Activated naive CD4-positive, alpha-beta T cell treated with anti-CD3 and anti-CD28 coated beads for 36 hours (primary cell): ENCODE measurements at regions of chr10 and their contacts with region 1.

Region 1: GRCh38 chr10:11236234-11236633 is 218.6 kb downstream of the CELF2 start:
- DNase-seq: peak; percentile 61
- H3K4me3 Mint-ChIP-seq: peak overlapping the region; percentile 26
- H3K27ac Mint-ChIP-seq: peak overlapping the region; percentile 93
- H3K4me1 Mint-ChIP-seq: peaks cover 92% of the 10 kb centered on the region
- H3K27me3 Mint-ChIP-seq: no peaks in the 10 kb centered on the region

Region 2: GRCh38 chr10:11170993-11171851 is 65.0 kb before region 1 on chr10:
- CTCF ChIA-PET with region 1: interaction called, 5 read pairs
- intact Hi-C with region 1: loop called (anchors 1 kb)
- DNase-seq: peak; percentile 80
- H3K4me3 Mint-ChIP-seq: no peak overlapping the region
- H3K27ac Mint-ChIP-seq: no peak overlapping the region
- H3K4me1 Mint-ChIP-seq: peaks cover 41% of the 10 kb centered on the region
- H3K27me3 Mint-ChIP-seq: no peaks in the 10 kb centered on the region

Region 3: GRCh38 chr10:11218395-11218794 is 17.8 kb before region 1 on chr10:
- CTCF ChIA-PET with region 1: interaction called, 5 read pairs
- intact Hi-C with region 1: loop called (anchors 1 kb)
- DNase-seq: peak; percentile 64
- H3K4me3 Mint-ChIP-seq: no peak overlapping the region
- H3K27ac Mint-ChIP-seq: peak overlapping the region; percentile 89
- H3K4me1 Mint-ChIP-seq: peaks cover 89% of the 10 kb centered on the region
- H3K27me3 Mint-ChIP-seq: no peaks in the 10 kb centered on the region

Region 4: GRCh38 chr10:11270135-11270857 is 34.1 kb after region 1 on chr10:
- CTCF ChIA-PET with region 1: interaction called, 12 read pairs
- intact Hi-C with region 1: loop called (anchors 1 kb)
- DNase-seq: peak; percentile 85
- H3K4me3 Mint-ChIP-seq: no peak overlapping the region
- H3K27ac Mint-ChIP-seq: peak overlapping the region; percentile 52
- H3K4me1 Mint-ChIP-seq: peaks cover 77% of the 10 kb centered on the region
- H3K27me3 Mint-ChIP-seq: no peaks in the 10 kb centered on the region

Region 5: GRCh38 chr10:11472158-11472753 is 236.0 kb after region 1 on chr10:
- CTCF ChIA-PET with region 1: no interaction called
- intact Hi-C with region 1: no loop called
- DNase-seq: peak; percentile 85
- H3K4me3 Mint-ChIP-seq: no peak overlapping the region
- H3K27ac Mint-ChIP-seq: no peak overlapping the region
- H3K4me1 Mint-ChIP-seq: no peaks in the 10 kb centered on the region
- H3K27me3 Mint-ChIP-seq: no peaks in the 10 kb centered on the region

Region 6: GRCh38 chr10:11684717-11685645 is 448.7 kb after region 1 on chr10:
- CTCF ChIA-PET with region 1: no interaction called
- intact Hi-C with region 1: loop called (anchors 5 kb)
- DNase-seq: peak; percentile 86
- H3K4me3 Mint-ChIP-seq: peak overlapping the region; percentile 75
- H3K27ac Mint-ChIP-seq: peak overlapping the region; percentile 95
- H3K4me1 Mint-ChIP-seq: peaks cover 36% of the 10 kb centered on the region
- H3K27me3 Mint-ChIP-seq: peaks cover 1% of the 10 kb centered on the region